ENCODE measurements at regions of chr18 and their contacts with region 1.

Region 1: GRCh38 chr18:37529863-37530262 is 35.7 kb downstream of the CELF4 start:
- DNase-seq: no peak
- H3K4me3 ChIP-seq: no peak overlapping the region
- H3K27ac ChIP-seq: no peak overlapping the region
- H3K4me1 ChIP-seq: peaks cover 7 to 15% (median 9%) of the 10 kb centered on the region in 4 experiments
- H3K27me3 ChIP-seq: peaks cover 0 to 4% (median under 1%) of the 10 kb centered on the region in 4 experiments; a peak in 5 of 7 replicates
- CTCF ChIP-seq: no peak
- EP300 ChIP-seq: no peak
- POLR2A ChIP-seq: no peak
- RAD21 ChIP-seq: no peak

Region 2: DNA sequence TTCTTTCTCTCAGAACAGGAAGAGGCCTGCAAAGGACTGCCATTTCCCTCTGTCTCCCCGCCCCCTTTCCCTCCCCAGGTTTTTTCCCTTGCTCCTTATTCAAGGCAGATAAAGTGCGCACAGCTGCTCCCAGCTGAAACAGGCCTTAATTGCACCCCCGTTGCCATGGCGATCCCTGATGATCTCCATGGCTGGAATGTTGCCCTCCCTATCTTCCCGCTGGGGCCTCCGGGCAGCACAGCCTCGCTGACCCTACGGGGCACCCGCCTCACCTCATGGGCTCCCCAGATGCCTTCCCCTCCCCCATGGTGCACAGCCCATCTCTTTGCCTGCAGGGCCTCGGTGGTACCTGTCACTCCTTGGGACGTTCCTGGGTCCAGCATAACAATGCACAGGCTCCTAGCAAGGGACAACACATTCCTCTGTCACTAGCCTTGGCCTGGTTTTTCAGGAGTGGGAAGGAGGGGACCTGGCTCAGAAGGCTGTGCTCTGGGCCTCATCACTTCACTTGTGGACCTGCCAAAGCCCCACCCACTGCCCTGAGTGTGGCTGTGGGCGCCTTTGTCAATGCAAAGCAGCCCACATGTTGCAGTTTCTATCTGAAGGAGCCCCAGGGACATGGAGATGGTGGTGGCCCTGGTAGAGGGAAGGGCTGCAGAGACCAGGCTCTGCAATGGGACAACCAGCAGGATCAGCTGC is 79.3 kb before region 1 on chr18:
- CTCF ChIA-PET with region 1: interaction called, 31 read pairs
- POLR2A ChIA-PET with region 1: no interaction called
- DNase-seq: peak; percentile 46 to 74
- H3K4me3 ChIP-seq: peak overlapping the region in 1 of 4 experiments; percentile 18; a peak in 1 of 8 replicates
- H3K27ac ChIP-seq: 0 out of 2 replicates have a peak overlapping the region, but pooled peaks have one; percentile 18
- H3K4me1 ChIP-seq: peaks cover 8 to 16% (median 10%) of the 10 kb centered on the region in 4 experiments
- H3K27me3 ChIP-seq: peaks cover 0 to 3% (median 0%) of the 10 kb centered on the region in 4 experiments; a peak in 2 of 7 replicates
- CTCF ChIP-seq: no peak
- EP300 ChIP-seq: peak in 1 of 2 experiments; percentile 61; a peak in 1 of 3 replicates
- POLR2A ChIP-seq: no peak
- RAD21 ChIP-seq: no peak

Region 3: GRCh38 chr18:37493352-37493935 is 36.4 kb before region 1 on chr18:
- CTCF ChIA-PET with region 1: interaction called, 93 read pairs
- POLR2A ChIA-PET with region 1: no interaction called
- DNase-seq: no peak
- H3K4me3 ChIP-seq: no peak overlapping the region
- H3K27ac ChIP-seq: no peak overlapping the region
- H3K4me1 ChIP-seq: peaks cover 0 to 29% (median 11%) of the 10 kb centered on the region in 4 experiments; a peak in 6 of 7 replicates
- H3K27me3 ChIP-seq: peaks cover 0 to 3% (median 0%) of the 10 kb centered on the region in 4 experiments; a peak in 4 of 7 replicates
- CTCF ChIP-seq: peak in 1 of 3 experiments; percentile 19; a peak in 1 of 4 replicates
- EP300 ChIP-seq: no peak
- POLR2A ChIP-seq: no peak
- RAD21 ChIP-seq: peak; percentile 11 to 31; a peak in 1 of 4 replicates

Region 4: DNA sequence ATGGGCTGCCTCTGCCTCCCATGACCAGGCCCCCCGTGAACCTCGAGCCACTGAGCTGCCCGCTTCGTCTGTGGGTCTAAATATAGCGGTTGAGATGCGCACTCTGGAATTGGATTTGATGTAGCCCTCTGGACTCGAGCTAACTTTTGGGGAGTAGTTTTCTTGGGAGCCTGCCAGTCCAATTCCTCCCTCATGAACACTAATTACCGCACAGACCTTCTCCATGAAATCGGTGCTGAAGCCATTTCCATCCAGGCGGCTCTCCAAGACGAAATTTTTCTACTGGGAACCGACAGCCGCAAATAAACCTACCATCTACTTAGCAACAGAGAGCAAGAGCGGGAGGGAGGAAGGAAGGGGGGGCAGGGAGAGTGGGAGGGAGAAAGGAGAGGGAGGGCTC is 27.8 kb before region 1 on chr18:
- CTCF ChIA-PET with region 1: interaction called, 34 read pairs
- POLR2A ChIA-PET with region 1: interaction called, 3 read pairs
- DNase-seq: no peak
- H3K4me3 ChIP-seq: no peak overlapping the region
- H3K27ac ChIP-seq: no peak overlapping the region
- H3K4me1 ChIP-seq: peaks cover 0 to 10% (median 3%) of the 10 kb centered on the region in 4 experiments; a peak in 3 of 7 replicates
- H3K27me3 ChIP-seq: no peaks in the 10 kb centered on the region
- CTCF ChIP-seq: no peak
- EP300 ChIP-seq: no peak
- POLR2A ChIP-seq: no peak
- RAD21 ChIP-seq: no peak

Region 5: DNA sequence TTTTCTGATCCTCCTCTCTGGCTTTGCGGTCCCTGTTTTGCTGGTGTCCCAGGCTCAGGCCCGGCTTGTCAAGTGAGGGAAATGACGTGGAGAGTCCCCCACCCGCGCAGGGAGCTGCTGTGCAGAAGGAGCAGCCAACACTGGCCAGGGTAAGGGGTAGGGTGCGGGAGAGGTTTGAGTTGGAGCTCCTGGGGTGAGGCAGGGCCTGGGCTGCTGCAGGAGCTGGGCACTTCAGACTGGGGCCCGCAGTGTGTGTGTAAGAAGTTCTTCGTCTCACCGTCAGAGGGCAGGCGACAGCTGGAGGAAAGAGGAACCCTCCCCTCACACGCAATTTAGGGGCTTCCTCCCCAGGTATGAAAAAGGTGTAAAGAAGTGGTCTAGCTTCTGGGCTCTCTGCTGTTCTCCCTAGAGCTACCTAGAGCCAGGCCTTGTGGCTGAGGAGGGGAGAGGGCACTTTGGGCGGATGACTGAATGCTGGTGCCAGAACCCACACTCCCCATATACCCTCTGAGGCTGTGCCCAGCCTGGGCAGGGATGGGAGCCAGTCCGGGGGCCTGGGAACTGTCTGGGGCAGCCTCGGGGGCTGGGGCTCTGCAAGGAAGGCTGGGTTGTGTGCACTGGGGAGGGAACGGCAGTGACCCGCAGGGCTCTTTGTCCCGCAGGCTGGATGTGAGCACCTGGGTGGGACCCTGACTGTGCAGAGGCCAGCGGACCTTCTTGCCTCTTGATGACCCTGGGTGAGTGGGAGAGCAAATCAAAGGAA is 24.0 kb after region 1 on chr18:
- CTCF ChIA-PET with region 1: interaction called, 12 read pairs
- POLR2A ChIA-PET with region 1: no interaction called
- DNase-seq: peak in 1 of 2 experiments; percentile 69
- H3K4me3 ChIP-seq: peak overlapping the region in 3 of 4 experiments; percentile 18 to 47 (median 29); a peak in 6 of 8 replicates
- H3K27ac ChIP-seq: no peak overlapping the region
- H3K4me1 ChIP-seq: peaks cover 5 to 13% (median 7%) of the 10 kb centered on the region in 4 experiments; a peak in 6 of 7 replicates
- H3K27me3 ChIP-seq: peaks cover 0 to 15% (median 11%) of the 10 kb centered on the region in 4 experiments; a peak in 6 of 7 replicates
- CTCF ChIP-seq: peak; percentile 69 to 80 (median 80)
- EP300 ChIP-seq: no peak
- POLR2A ChIP-seq: no peak
- RAD21 ChIP-seq: peak; percentile 73 to 74